Ascending aorta (tissue), 2 donors: ENCODE measurements at regions of chr12 and their contacts with region 1.

Region 1: DNA sequence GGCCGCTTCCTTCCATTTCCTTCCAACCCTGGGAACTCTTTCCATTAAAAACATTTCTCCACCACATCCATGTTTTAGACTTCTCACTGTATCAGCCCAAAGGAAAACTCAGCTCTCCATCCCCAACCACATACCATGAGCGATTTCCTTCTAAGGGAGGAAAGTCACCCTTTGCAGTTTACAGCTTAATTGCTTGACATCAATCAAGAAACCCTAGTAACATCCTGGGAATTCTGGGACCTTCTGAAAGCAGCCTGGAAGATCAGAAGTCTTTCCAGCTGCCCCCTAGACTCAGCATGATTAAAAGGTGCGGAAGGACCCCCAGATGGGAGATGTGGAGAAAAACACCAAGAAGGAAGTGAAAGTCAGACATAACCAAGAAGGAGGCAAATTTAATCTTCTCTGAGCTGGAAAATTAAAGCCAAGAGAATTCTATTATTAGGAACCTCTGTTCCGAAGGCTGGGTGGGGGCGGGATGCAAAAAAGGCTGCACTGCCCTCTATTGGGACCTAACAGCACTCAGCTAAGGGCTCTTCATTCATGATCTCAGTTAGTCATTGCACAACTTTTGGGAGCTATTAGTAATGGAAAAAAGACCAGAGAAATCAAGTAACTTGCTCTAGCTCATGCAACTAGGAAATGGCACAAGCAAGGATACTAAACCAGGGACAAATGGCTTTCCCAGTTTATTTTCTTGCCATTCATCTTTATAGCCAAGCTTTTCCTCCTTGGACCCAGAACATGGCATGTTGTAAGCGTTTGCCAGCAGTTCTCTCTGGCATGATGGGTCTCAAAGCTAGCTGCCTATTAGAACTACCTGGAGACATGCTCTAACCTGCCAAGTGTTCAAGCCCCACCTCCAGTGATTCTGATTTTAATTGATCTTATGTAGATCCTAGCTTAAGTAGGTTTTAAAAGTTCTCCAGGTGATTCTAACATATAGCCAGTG is 73.1 kb upstream of the PLXNC1 start:
- DNase-seq: peak in 1 of 2 donors; percentile 90
- H3K4me3 ChIP-seq: peak overlapping the region in 1 of 2 donors; percentile 39
- H3K27ac ChIP-seq: peak overlapping the region; percentile 89 to 94
- H3K4me1 ChIP-seq: peaks cover 0 to 21% of the 10 kb centered on the region in 2 donors
- H3K27me3 ChIP-seq: no peaks in the 10 kb centered on the region
- CTCF ChIP-seq: peak; percentile 62 to 76 (median 67)

Region 2: DNA sequence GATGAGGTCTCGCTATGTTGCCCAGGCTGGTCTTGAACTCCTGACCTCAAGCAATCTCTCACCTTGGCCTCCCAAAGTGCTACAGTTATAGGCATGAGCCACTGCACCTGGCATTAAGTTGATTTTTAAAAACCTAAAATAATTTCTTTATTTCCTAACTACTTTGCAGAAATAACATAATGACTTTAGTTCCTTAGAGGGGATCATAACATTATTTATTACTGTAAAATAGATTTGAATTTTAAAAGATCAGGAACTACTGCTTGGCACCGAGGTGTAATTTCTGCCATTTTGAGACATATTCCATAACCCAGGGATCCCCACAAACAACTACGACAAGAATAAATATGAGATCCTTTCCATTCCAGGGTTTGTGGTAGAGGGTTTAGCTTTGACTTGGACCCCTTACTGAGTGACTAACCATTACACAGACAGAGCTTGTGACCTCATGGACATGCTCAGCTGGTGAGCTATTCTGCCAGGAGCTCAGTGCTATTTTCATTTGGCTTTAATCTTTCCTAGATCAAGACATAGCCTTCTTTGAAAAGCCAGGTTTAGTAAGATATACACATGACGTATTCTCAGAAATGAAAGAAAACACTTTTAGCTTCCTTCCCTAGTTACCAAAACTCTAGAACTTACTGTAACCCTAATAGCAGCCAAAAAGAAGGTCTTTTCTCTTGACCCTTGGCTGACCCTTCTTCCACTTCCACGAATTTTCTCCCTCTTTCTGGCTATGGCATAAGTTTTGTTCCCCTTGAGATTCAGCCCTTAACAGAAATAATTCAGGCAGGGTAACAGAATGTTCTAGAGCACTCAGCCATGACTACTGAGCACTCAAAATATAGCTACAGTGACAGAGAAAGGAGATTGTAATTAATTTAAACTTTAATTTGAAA is 772.7 kb before region 1 on chr12:
- intact Hi-C with region 1: loop called (anchors 10 kb)
- DNase-seq: peak in 1 of 2 donors; percentile 87
- H3K4me3 ChIP-seq: no peak overlapping the region
- H3K27ac ChIP-seq: peak overlapping the region; percentile 72 to 75
- H3K4me1 ChIP-seq: peaks cover 5 to 22% of the 10 kb centered on the region in 2 donors
- H3K27me3 ChIP-seq: no peaks in the 10 kb centered on the region
- CTCF ChIP-seq: no peak

Region 3: GRCh38 chr12:93785262-93786010 is 289.8 kb before region 1 on chr12:
- intact Hi-C with region 1: loop called (anchors 2 kb)
- DNase-seq: peak; percentile 29 to 85
- H3K4me3 ChIP-seq: peak overlapping the region in 1 of 2 donors; percentile 24
- H3K27ac ChIP-seq: peak overlapping the region; percentile 78 to 86
- H3K4me1 ChIP-seq: peaks cover 14 to 35% of the 10 kb centered on the region in 2 donors
- H3K27me3 ChIP-seq: no peaks in the 10 kb centered on the region
- CTCF ChIP-seq: no peak

Region 4: GRCh38 chr12:93894391-93895088 is 180.7 kb before region 1 on chr12:
- intact Hi-C with region 1: loop called (anchors 2 kb)
- DNase-seq: peak; percentile 57 to 94
- H3K4me3 ChIP-seq: peak overlapping the region in 1 of 2 donors; percentile 2
- H3K27ac ChIP-seq: peak overlapping the region; percentile 73 to 75
- H3K4me1 ChIP-seq: peaks cover 4 to 17% of the 10 kb centered on the region in 2 donors
- H3K27me3 ChIP-seq: no peaks in the 10 kb centered on the region
- CTCF ChIP-seq: no peak

Region 5: DNA sequence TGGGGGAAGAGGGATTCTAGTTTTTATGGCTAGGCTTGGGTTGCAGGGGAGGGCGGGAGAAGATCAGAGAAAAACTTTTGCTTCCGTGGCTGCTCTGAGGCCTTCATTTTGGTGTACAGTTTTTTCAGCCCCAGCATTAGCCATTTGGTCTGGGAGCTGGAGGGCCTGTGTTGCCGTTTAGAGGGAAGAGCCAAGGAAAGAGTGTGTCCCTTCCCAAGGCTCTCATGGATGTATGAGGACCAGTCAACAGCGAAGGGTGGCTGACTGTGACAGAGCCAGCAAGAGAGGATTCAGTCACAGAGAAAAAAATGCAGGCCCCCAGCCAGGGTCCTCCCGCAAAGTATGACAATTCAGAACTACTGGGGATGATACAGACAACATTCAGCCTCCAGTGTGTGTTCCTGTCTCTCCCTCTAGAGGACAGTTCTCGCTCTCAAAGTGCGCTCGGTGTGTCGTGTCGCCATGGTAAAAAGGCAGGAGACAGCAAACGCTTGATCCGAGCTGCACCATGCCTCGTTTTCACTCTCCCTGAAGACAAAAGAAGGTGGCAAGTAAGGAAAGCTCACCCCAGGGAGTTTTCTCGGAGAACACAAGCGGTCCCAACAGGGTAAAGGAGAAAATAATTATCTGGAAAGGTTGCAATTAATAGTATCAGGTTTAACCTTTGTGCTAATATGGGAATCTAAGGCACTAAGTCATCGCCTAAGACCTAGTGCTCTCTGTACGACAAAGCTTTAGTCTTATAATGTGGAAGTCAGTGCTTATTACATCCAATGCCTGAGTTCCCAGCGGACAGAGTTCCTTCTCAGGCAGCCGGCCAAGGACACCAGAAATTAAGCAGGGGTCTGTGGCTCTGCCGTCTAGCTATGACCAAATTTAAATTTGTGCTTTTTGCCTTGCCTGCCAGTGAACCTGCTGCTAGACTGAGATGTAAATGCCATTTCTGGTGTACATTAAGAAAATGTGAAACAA is 84.1 kb before region 1 on chr12:
- intact Hi-C with region 1: loop called (anchors 5 kb)
- DNase-seq: no peak
- H3K4me3 ChIP-seq: no peak overlapping the region
- H3K27ac ChIP-seq: peak overlapping the region; percentile 1 to 18
- H3K4me1 ChIP-seq: peaks cover 0 to 3% of the 10 kb centered on the region in 2 donors
- H3K27me3 ChIP-seq: no peaks in the 10 kb centered on the region
- CTCF ChIP-seq: peak in 2 of 3 experiments; percentile 5 to 31

Region 6: DNA sequence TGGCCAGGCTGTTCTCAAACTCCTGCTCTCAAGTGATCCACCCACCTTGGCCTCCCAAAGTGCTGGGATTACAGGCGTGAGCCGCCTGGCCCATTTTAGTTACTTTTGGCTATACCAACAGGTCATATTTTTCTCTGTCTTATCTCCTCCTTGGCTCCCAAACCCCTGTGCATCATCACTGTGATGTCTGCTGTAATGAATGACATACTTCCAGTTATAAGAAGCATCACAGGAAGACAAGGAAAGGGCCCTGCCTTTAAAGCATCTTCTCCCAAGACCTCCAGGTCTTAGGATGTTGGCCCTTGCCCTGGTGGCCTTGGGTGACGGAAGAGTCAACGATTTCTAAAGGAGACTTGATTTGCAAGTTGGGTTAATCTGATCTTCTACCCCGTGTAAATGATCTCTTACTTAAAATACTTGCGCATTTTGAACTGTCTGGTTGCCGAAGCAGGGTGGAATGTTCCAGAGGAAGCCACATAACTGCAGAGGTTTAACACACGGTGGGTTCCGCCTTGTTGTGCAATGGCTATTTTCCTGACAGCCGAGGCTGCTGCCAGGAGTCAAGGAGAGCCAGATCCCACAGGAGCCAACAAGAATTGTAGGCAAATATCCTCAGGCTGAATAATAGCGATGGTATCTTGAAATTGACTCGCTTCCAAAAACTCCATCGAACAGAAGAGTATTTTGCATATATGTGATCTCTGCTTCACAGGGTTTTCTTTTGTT is 17.4 kb after region 1 on chr12:
- intact Hi-C with region 1: loop called (anchors 2 kb)
- DNase-seq: peak in 1 of 2 donors; percentile 90
- H3K4me3 ChIP-seq: no peak overlapping the region
- H3K27ac ChIP-seq: peak overlapping the region; percentile 33 to 54
- H3K4me1 ChIP-seq: peaks cover 5 to 16% of the 10 kb centered on the region in 2 donors
- H3K27me3 ChIP-seq: no peaks in the 10 kb centered on the region
- CTCF ChIP-seq: no peak